Activated B cell treated with CpG ODN at 0.5 μM for 24 hours (primary cell): ENCODE measurements at regions of chr1 and their contacts with region 1.

Region 1: DNA sequence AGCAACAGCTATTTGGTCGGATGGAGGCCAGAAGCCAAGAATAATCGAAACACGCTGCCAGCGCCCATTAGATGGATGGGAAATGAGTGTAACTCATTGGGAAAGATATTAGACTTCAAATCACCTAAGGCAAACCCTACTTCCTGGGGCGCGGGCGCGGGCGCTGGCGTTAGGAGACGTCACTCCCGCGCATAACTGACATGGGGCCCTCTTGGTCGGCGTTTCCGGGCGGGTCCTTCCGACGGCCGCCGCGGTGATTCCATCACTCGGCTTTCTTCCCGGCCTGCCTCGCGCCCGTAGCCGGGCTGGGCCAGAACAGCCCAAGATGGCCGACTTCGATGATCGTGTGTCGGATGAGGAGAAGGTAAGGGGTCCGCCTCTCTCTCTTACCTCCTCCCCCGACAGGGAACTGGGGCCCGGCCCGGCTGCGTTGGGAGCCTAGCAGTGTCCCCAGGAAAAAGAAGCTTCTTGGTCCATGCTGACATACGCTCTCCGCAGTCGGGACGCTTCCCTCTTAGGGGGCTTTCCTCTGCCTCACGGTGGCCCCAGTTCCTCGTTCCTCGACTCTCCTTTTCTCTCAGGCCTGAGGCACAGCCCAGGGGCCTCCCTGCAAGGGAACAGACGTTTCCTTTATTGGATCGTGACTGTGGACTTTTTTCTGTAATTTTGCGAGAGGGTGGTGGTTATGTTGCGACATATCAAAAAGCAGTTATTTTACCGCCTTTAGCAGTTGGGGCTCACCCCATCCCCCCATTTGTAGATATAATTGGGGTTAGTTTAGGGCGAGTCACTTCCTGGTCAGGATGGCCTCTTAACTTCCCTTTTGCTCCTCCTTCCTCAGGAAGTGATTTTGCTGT is at the start of gene CAPZA1:
- DNase-seq: peak; percentile 82
- ATAC-seq: peak; percentile 83
- H3K4me3 Mint-ChIP-seq: peak within 1 kb of the TSS; percentile 97
- H3K27ac Mint-ChIP-seq: peak within 1 kb of the TSS; percentile 99
- H3K4me1 Mint-ChIP-seq: peaks cover 54% of the 10 kb centered on the region
- H3K27me3 Mint-ChIP-seq: no peaks in the 10 kb centered on the region
- CTCF ChIP-seq: no peak
- total RNA-seq, gene CAPZA1: 221 and 227 TPM in 2 replicates

Region 2: GRCh38 chr1:111481387-111482221 is 1138.1 kb before region 1 on chr1:
- CTCF ChIA-PET with region 1: no interaction called
- POLR2A ChIA-PET with region 1: no interaction called
- intact Hi-C with region 1: loop called (anchors 10 kb)
- DNase-seq: no peak
- ATAC-seq: peak; percentile 73
- H3K4me3 Mint-ChIP-seq: no peak overlapping the region
- H3K27ac Mint-ChIP-seq: no peak overlapping the region
- H3K4me1 Mint-ChIP-seq: peaks cover 42% of the 10 kb centered on the region
- H3K27me3 Mint-ChIP-seq: no peaks in the 10 kb centered on the region
- CTCF ChIP-seq: no peak

Region 3: GRCh38 chr1:112395821-112396652 is 223.7 kb before region 1 on chr1 and contains the start of gene CTTNBP2NL:
- CTCF ChIA-PET with region 1: interaction called, 35 read pairs
- POLR2A ChIA-PET with region 1: interaction called, 12 read pairs
- intact Hi-C with region 1: loop called (anchors 1 kb)
- DNase-seq: peak; percentile 72
- ATAC-seq: peak; percentile 94
- H3K4me3 Mint-ChIP-seq: peak within 1 kb of the TSS; percentile 95
- H3K27ac Mint-ChIP-seq: peak within 1 kb of the TSS; percentile 71
- H3K4me1 Mint-ChIP-seq: peaks cover 54% of the 10 kb centered on the region
- H3K27me3 Mint-ChIP-seq: peaks cover under 1% of the 10 kb centered on the region
- CTCF ChIP-seq: no peak
- total RNA-seq, gene CTTNBP2NL: 11.7 and 14.1 TPM in 2 replicates

Region 4: DNA sequence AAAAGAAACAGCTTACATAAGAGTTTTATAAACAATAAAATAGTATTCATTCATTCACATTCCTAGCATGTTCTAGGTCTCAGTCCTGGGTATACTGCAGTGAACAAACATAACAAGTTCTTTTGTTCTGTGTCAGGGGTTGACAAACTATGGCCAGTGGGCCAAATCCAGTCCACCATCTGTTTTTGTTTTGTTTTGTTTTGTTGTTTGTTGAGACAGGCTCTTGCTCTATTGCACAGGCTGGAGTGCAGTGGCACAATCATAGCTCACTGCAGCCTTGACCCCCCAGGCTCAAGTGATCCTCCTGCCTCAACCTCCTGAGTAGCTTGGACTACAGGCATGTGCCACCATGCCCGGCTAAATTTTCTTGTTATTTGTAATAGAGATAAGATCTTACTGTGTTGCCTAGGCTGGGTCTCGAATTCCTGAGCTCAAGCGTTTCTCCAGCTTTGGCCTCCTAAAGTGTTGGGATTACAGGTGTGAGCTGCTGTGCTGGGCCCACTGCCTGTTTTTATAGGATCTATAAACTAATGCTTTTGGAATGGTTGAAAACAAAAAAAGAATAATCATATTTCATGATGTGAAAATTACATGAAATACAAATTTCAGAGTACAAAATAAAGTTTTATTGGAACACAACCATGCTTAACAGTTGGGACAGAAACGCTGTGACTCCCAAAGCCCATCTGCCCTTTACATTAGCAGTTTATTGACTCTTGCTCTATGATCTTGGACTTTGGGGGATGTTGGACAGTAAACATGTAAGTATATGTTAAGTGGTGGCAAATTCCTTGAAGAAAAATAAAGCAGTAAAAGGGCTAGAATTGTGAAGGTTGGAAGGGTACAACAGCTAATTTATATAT is 17.7 kb after region 1 on chr1:
- CTCF ChIA-PET with region 1: no interaction called
- POLR2A ChIA-PET with region 1: interaction called, 29 read pairs
- intact Hi-C with region 1: loop called (anchors 1 kb)
- DNase-seq: no peak
- ATAC-seq: no peak
- H3K4me3 Mint-ChIP-seq: no peak overlapping the region
- H3K27ac Mint-ChIP-seq: peak overlapping the region; percentile 46
- H3K4me1 Mint-ChIP-seq: peaks cover 55% of the 10 kb centered on the region
- H3K27me3 Mint-ChIP-seq: no peaks in the 10 kb centered on the region
- CTCF ChIP-seq: no peak

Region 5: GRCh38 chr1:112695276-112695675 is 75.5 kb after region 1 on chr1:
- CTCF ChIA-PET with region 1: no interaction called
- POLR2A ChIA-PET with region 1: interaction called, 15 read pairs
- intact Hi-C with region 1: no loop called
- DNase-seq: no peak
- ATAC-seq: no peak
- H3K4me3 Mint-ChIP-seq: no peak overlapping the region
- H3K27ac Mint-ChIP-seq: no peak overlapping the region
- H3K4me1 Mint-ChIP-seq: peaks cover 16% of the 10 kb centered on the region
- H3K27me3 Mint-ChIP-seq: no peaks in the 10 kb centered on the region
- CTCF ChIP-seq: no peak

Region 6: DNA sequence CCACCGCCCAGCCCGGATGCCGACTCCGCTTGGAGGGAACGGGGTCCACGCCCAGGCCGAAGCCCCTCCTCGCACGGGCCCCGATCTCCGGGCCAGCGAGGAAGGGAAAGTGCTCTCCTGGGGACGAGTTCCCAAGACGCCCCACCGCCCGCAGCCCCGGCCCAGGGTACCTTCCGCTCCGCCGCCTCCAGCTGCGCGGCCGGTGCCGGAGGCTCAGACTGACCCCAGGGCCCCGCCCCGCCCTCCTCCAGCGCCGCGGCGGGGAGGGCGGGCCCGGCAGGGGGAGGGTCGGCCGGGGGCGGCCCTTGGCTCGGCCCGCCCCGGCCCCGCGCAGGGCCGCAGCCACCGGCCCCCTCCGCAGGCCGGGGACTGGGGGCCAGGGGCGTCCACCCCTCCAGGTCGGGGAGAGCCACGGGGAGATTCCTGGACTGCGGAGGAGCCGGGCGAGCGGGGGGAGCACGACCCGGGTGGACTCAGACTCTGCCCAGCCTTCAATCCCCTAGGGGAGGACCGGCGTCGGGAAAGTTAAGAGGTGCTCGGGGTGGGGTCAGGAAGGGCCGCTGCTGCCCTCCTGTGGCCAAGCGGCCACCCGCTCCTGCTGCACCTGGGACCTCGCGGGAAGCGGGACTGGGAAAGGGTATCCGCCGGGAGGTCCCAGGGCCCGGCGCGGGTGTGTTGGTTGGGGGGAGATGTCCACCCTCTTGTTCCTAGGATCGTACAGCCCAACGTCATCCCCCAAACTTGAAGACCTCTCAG is 87.3 kb after region 1 on chr1 and contains the start of gene RHOC:
- CTCF ChIA-PET with region 1: interaction called, 3 read pairs
- POLR2A ChIA-PET with region 1: interaction called, 7 read pairs
- intact Hi-C with region 1: loop called (anchors 1 kb)
- DNase-seq: peak; percentile 74
- ATAC-seq: peak; percentile 86
- H3K4me3 Mint-ChIP-seq: peak within 1 kb of the TSS; percentile 82
- H3K27ac Mint-ChIP-seq: no peak within 1 kb of the TSS
- H3K4me1 Mint-ChIP-seq: peaks cover 47% of the 10 kb centered on the region
- H3K27me3 Mint-ChIP-seq: no peaks in the 10 kb centered on the region
- CTCF ChIP-seq: no peak
- total RNA-seq, gene RHOC: 11.5 and 13.5 TPM in 2 replicates

Region 7: GRCh38 chr1:113759333-113760101 is 1139.8 kb after region 1 on chr1 and contains the start of gene PHTF1:
- CTCF ChIA-PET with region 1: no interaction called
- POLR2A ChIA-PET with region 1: interaction called, 4 read pairs
- intact Hi-C with region 1: loop called (anchors 5 kb)
- DNase-seq: peak; percentile 73
- ATAC-seq: peak; percentile 88
- H3K4me3 Mint-ChIP-seq: peak within 1 kb of the TSS; percentile 94
- H3K27ac Mint-ChIP-seq: peak within 1 kb of the TSS; percentile 98
- H3K4me1 Mint-ChIP-seq: peaks cover 21% of the 10 kb centered on the region
- H3K27me3 Mint-ChIP-seq: no peaks in the 10 kb centered on the region
- CTCF ChIP-seq: no peak
- total RNA-seq, gene PHTF1: 19.2 and 25.0 TPM in 2 replicates